BJ (cell line): ENCODE measurements at regions of chr4 and their contacts with region 1.

Region 1: GRCh38 chr4:101910786-101911373 is 120.3 kb downstream of the BANK1 start:
- DNase-seq: no peak
- H3K4me3 ChIP-seq: no peak overlapping the region
- H3K27me3 ChIP-seq: no peaks in the 10 kb centered on the region
- CTCF ChIP-seq: no peak

Region 2: DNA sequence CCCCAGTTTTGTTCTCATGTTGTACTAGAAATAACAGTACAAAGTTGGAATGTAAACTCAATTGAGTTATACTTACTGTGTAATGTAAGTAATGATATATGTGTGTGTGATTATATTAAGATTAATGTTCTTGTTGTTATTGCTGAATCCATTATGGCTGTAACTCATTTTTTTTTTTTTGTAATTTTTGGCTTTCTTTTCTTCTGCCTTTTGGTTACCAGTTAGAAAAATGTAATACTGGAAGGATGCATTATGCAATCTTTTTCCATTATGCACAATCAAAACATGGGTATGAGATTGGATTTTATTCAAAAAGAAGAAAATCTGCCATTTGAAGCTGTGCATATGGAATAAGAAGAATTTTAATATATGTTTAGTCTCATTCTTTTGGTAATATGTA is 86.4 kb before region 1 on chr4:
- CTCF ChIA-PET with region 1: no interaction called
- POLR2A ChIA-PET with region 1: interaction called, 13 read pairs
- DNase-seq: no peak
- H3K4me3 ChIP-seq: no peak overlapping the region
- H3K27me3 ChIP-seq: no peaks in the 10 kb centered on the region
- CTCF ChIP-seq: no peak

Region 3: DNA sequence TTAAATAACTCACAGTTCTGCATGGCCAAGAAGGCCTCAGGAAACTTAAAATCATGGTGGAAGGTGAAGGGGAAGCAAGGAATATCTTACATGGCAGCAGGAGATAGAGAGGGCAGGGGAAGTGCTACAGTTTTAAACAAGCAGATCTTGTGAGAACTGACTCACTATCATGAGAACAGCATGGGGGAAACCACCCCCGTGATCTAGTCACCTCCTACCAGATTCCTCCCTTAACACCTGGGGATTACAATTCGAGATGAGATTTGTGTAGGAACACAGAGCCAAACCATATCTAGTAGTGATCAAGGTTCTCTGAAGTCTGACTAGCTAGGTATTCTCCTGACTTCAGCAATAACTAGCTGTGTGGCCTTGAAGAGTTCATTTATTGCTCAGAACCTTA is 64.3 kb before region 1 on chr4:
- CTCF ChIA-PET with region 1: no interaction called
- POLR2A ChIA-PET with region 1: no interaction called
- DNase-seq: no peak
- H3K4me3 ChIP-seq: no peak overlapping the region
- H3K27me3 ChIP-seq: no peaks in the 10 kb centered on the region
- CTCF ChIP-seq: no peak

Region 4: GRCh38 chr4:101921329-101921728 is 10.4 kb after region 1 on chr4:
- CTCF ChIA-PET with region 1: no interaction called
- POLR2A ChIA-PET with region 1: no interaction called
- DNase-seq: no peak
- H3K4me3 ChIP-seq: no peak overlapping the region
- H3K27me3 ChIP-seq: no peaks in the 10 kb centered on the region
- CTCF ChIP-seq: no peak

Region 5: GRCh38 chr4:101987623-101988243 is 76.9 kb after region 1 on chr4:
- CTCF ChIA-PET with region 1: no interaction called
- POLR2A ChIA-PET with region 1: no interaction called
- DNase-seq: no peak
- H3K4me3 ChIP-seq: no peak overlapping the region
- H3K27me3 ChIP-seq: no peaks in the 10 kb centered on the region
- CTCF ChIP-seq: no peak

Region 6: DNA sequence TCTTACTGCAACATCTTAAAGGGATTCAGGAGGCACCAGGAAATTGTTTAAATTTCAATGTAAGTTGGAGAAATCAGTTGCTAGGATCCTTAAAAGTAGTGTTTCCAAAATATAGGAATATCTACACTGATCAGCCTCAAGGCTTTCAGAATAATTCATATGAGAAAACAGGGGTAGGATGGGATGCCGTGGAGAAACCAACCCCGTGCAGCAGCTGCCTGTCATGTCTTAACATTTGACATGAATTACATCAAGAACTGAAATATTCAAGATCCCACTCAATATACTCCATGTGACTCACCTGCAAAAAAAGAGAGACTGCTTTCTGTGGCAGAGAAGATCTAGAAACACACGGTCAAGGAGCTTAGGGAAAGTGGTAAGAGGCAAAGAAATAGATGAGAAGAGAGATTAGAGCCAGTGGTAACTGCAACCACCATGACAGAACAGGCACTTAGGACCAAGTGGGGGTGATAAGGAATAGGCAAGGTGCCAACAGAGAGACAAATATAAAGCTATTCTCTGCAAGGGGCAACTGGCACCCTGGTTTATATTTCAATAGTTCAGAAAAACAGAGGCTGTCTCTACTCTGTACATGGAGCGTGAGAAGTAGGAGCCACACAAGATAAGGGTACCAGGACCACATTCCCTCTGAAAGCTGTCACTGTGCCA is 370.4 kb after region 1 on chr4:
- CTCF ChIA-PET with region 1: no interaction called
- POLR2A ChIA-PET with region 1: no interaction called
- DNase-seq: no peak
- H3K4me3 ChIP-seq: no peak overlapping the region
- H3K27me3 ChIP-seq: no peaks in the 10 kb centered on the region
- CTCF ChIP-seq: no peak